Aorta (tissue), 5 donors: ENCODE measurements at regions of chr9 and their contacts with region 1.

Region 1: DNA sequence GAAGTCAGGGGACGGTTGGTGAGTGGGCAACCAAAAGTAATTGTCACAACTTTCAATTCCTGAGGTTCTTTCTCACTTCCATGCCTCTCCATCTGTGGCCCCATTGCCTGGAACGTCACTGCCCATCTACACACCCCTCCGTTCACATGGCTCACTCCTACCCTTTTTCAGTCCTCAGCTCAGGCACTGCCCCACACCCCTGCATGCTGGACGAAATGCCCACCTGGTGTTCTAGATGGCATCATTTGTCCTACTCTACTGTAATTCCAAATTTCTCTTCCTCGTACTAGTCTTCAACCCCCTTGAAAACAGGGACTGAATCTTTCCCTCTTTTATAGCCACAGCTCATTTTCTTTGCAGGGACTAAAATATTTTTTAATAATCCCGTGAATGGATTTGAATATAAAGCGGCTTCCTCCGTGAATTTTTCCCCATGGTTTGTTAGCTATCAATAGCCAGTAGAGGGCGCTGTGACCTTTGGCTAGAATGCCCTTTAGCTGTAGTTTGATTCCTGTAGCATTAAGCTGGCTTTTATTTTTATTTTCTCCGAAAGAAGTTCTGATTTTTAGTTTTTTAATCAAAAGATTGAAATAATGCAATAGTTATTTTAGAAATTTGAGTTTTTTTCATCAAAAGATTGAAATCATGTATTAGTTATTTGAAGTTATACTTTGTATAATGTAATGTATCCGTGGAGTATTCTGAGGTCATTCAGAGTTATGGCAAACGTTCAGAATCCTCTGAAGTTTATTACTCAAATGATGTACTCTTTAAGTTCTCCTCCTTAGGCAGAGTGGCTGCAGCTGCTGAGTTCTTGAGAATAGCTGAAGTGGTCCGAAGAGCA is 232.1 kb downstream of the SH3GL2 start:
- DNase-seq: peak in 1 of 2 donors; percentile 48
- ATAC-seq: peak; percentile 76
- H3K4me3 ChIP-seq: no peak overlapping the region
- H3K27ac ChIP-seq: no peak overlapping the region
- H3K4me1 ChIP-seq: no peaks in the 10 kb centered on the region
- H3K27me3 ChIP-seq: no peaks in the 10 kb centered on the region

Region 2: GRCh38 chr9:17894471-17895178 is 83.7 kb after region 1 on chr9:
- intact Hi-C with region 1: no loop called
- DNase-seq: no peak
- ATAC-seq: no peak
- H3K4me3 ChIP-seq: no peak overlapping the region
- H3K27ac ChIP-seq: no peak overlapping the region
- H3K4me1 ChIP-seq: no peaks in the 10 kb centered on the region
- H3K27me3 ChIP-seq: no peaks in the 10 kb centered on the region

Region 3: GRCh38 chr9:17906176-17906840 is 95.4 kb after region 1 on chr9:
- intact Hi-C with region 1: loop called in 1 of 2 experiments (anchors 5 kb)
- DNase-seq: peak; percentile 64 to 79
- ATAC-seq: peak; percentile 74
- H3K4me3 ChIP-seq: peak overlapping the region; percentile 65 to 76
- H3K27ac ChIP-seq: peak overlapping the region in 1 of 2 donors; percentile 33
- H3K4me1 ChIP-seq: no peaks in the 10 kb centered on the region
- H3K27me3 ChIP-seq: no peaks in the 10 kb centered on the region

Region 4: GRCh38 chr9:18014556-18014955 is 203.6 kb after region 1 on chr9:
- intact Hi-C with region 1: loop called in 1 of 2 experiments (anchors 10 kb)
- DNase-seq: no peak
- ATAC-seq: no peak
- H3K4me3 ChIP-seq: no peak overlapping the region
- H3K27ac ChIP-seq: no peak overlapping the region
- H3K4me1 ChIP-seq: peaks cover 0 to 2% of the 10 kb centered on the region in 2 donors
- H3K27me3 ChIP-seq: no peaks in the 10 kb centered on the region

Region 5: GRCh38 chr9:18143028-18143745 is 332.2 kb after region 1 on chr9:
- intact Hi-C with region 1: loop called in 1 of 2 experiments (anchors 10 kb)
- DNase-seq: no peak
- ATAC-seq: no peak
- H3K4me3 ChIP-seq: no peak overlapping the region
- H3K27ac ChIP-seq: no peak overlapping the region
- H3K4me1 ChIP-seq: peaks cover 2 to 10% of the 10 kb centered on the region in 2 donors
- H3K27me3 ChIP-seq: no peaks in the 10 kb centered on the region

Region 6: DNA sequence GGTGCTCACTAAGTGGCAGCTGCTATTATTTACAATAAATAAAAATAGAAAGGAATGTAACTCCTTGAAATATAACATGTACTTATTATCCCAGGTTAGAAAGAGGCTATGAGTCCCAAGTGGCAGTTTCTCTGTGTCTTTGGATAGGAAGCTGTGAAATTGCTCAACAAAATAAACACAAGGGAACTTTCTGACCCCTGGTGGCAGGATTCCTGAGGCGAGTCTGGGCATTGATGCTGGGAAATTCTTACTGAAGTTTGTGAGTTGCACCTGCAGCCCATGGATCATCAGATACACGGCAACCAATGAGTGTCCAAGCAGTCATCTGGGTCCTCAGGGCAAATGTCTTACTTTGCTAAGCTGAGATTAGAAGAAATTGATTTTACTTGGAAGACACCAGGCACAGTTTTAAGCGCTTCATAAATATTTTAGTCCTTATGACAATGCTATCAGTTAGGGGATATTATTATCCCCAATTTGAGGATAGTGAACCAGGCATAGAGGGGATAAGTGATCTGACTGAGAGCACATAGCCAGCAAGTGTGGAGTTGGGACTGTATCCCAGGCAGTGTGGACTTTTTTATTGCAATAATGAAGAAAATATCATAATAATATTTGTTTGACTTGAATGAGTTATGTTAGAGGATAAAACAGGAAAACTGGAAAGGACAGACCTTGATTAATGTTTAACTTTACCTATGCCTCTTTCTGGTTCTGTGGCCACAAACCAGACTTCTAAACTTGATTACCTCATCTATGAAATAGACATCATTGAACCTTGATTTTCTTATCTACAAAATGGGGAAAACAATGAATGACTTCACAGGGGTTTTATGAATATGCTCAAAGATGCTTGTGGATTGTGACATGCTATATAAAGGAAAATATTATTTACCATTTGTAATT is 397.5 kb after region 1 on chr9:
- intact Hi-C with region 1: loop called (anchors 2 kb)
- DNase-seq: no peak
- ATAC-seq: peak; percentile 44
- H3K4me3 ChIP-seq: no peak overlapping the region
- H3K27ac ChIP-seq: no peak overlapping the region
- H3K4me1 ChIP-seq: peaks cover 0 to 4% of the 10 kb centered on the region in 2 donors
- H3K27me3 ChIP-seq: no peaks in the 10 kb centered on the region

Region 7: GRCh38 chr9:19028835-19029451 is 1218.0 kb after region 1 on chr9:
- intact Hi-C with region 1: loop called in 1 of 2 experiments (anchors 10 kb)
- DNase-seq: no peak
- ATAC-seq: peak; percentile 83
- H3K4me3 ChIP-seq: no peak overlapping the region
- H3K27ac ChIP-seq: no peak overlapping the region
- H3K4me1 ChIP-seq: no peaks in the 10 kb centered on the region
- H3K27me3 ChIP-seq: no peaks in the 10 kb centered on the region